AG04449 (cell line): ENCODE measurements at regions of chr17 and their contacts with region 1.

Region 1: GRCh38 chr17:50094753-50095619 is at the start of gene PDK2:
- DNase-seq: peak; percentile 47
- H3K4me3 ChIP-seq: peak within 1 kb of the TSS; percentile 89
- CTCF ChIP-seq: no peak

Region 2: GRCh38 chr17:50020841-50021599 is 74.0 kb before region 1 on chr17:
- CTCF ChIA-PET with region 1: interaction called, 165 read pairs
- POLR2A ChIA-PET with region 1: no interaction called
- DNase-seq: no peak
- H3K4me3 ChIP-seq: no peak overlapping the region
- CTCF ChIP-seq: no peak

Region 3: GRCh38 chr17:50055426-50056230 is 39.4 kb before region 1 on chr17 and contains the start of gene ITGA3:
- CTCF ChIA-PET with region 1: interaction called, 12 read pairs
- POLR2A ChIA-PET with region 1: no interaction called
- DNase-seq: no peak
- H3K4me3 ChIP-seq: peak within 1 kb of the TSS; percentile 78
- CTCF ChIP-seq: no peak

Region 4: DNA sequence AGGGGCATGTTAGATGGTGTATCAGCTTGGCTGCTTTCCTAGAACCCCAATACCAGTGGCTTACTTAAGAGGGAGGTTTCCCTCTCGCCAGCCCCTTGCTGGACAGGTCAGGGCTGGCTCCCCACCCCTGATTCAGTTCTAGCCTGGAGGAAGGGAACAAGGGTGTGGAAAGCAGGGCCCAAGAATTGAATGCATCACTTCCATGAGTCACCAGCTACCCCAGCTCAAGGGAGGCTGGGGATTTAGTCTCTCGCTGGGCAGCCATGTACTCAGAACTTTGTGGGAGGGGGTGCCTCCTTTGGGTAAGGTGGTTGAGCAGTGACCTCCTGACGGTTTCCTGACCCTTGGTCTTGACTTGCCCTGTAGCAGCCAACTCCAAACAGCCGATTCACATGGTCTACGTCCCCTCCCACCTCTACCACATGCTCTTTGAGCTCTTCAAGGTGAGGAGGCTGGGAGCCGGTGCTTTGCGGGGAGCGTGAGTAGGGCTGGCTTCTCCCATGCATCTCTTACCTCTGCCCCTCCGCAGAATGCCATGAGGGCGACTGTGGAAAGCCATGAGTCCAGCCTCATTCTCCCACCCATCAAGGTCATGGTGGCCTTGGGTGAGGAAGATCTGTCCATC is 12.9 kb after region 1 on chr17:
- CTCF ChIA-PET with region 1: interaction called, 92 read pairs
- POLR2A ChIA-PET with region 1: no interaction called
- DNase-seq: peak; percentile 14
- H3K4me3 ChIP-seq: no peak overlapping the region
- CTCF ChIP-seq: no peak

Region 5: DNA sequence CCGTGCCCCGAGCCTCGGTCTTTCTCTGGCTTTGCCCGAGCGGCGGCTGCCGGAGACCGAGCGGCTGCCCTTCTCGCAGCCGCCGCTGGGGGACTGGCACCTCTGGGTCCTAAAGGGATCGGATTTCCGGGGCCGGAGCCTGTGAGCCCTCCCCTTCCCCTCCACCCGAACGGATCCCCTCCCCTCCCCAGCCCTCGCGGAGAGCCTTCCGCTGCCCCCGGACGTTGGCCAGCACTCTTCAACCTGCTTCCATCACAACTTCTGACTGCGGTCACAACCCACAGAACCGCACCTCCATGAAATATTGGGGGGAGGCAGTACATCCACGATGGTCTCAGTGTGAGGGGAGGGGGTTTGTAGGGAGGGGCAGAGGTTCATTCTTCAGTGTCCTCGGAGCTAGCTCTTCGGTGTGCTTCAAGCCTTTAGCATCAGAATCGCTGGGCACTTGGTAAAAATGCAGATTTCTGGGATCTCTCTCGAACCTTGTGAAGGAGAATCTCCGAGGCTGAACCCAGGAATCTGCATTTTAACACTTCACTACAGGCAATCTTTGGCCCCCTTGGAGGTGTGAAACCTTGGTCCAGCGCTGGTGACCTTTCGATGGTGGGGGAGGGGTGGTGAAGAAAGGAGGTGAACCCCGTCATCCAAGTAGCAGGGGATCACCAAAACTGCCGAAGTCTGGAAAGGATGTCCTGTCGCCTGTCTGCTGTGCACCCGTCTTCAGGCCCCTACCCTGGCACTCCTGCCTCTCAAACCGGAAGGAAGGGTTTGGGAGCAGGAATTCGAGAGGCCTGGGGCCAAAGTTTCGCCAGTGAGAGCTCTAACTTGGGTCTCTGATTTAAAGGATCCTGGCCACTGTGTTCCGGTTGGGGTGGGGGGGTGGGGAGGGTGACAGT is 56.3 kb after region 1 on chr17:
- CTCF ChIA-PET with region 1: interaction called, 30 read pairs
- POLR2A ChIA-PET with region 1: interaction called, 5 read pairs
- DNase-seq: no peak
- H3K4me3 ChIP-seq: peak overlapping the region; percentile 77
- CTCF ChIP-seq: peak; percentile 81

Region 6: GRCh38 chr17:50194934-50195865 is 100.2 kb after region 1 on chr17:
- CTCF ChIA-PET with region 1: no interaction called
- POLR2A ChIA-PET with region 1: no interaction called
- DNase-seq: no peak
- H3K4me3 ChIP-seq: peak overlapping the region; percentile 100
- CTCF ChIP-seq: peak; percentile 65

Region 7: GRCh38 chr17:50304781-50305404 is 209.9 kb after region 1 on chr17:
- CTCF ChIA-PET with region 1: interaction called, 25 read pairs
- POLR2A ChIA-PET with region 1: no interaction called
- DNase-seq: no peak
- H3K4me3 ChIP-seq: no peak overlapping the region
- CTCF ChIP-seq: no peak